Activated CD8-positive, alpha-beta T cell treated with anti-CD3 and anti-CD28 coated beads for 36 hours (primary cell): ENCODE measurements at regions of chr12 and their contacts with region 1.

Region 1: DNA sequence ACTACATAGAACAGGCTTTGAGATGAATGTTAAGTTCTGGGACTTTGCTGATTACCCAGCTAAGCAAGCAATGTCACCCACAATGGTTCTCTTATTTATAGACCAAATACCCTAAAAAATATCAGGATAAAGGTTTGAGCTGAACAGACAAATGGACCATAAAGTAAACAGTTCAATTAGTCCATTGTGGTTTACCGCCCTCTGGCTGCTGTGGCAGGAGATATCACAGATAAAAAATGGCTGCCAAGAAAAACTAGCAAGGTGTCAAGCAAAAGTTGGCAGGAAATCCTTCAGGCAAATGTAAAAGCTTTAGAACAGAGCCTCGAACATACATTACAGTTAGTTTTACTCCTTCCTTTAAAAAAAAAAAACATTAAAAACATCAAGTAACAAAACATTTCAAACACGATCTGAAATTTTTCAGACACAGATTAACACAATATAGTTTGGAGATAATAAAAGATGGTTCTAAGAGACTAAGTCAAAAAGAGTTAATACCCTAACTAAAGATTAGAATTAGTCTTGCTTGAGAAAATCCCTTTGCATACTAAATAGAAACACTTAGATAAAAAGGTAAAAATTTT is 41.3 kb downstream of the MED13L start:
- DNase-seq: peak; percentile 70
- ATAC-seq: peak; percentile 71
- H3K4me3 Mint-ChIP-seq: peak overlapping the region; percentile 53
- H3K27ac Mint-ChIP-seq: peak overlapping the region; percentile 85
- H3K4me1 Mint-ChIP-seq: peaks cover 40% of the 10 kb centered on the region
- H3K27me3 Mint-ChIP-seq: no peaks in the 10 kb centered on the region
- CTCF ChIP-seq: peak; percentile 64

Region 2: GRCh38 chr12:115998119-115998633 is 238.1 kb before region 1 on chr12:
- CTCF ChIA-PET with region 1: interaction called, 17 read pairs
- POLR2A ChIA-PET with region 1: no interaction called
- intact Hi-C with region 1: no loop called
- DNase-seq: peak; percentile 14
- ATAC-seq: peak; percentile 66
- H3K4me3 Mint-ChIP-seq: no peak overlapping the region
- H3K27ac Mint-ChIP-seq: no peak overlapping the region
- H3K4me1 Mint-ChIP-seq: peaks cover 6% of the 10 kb centered on the region
- H3K27me3 Mint-ChIP-seq: no peaks in the 10 kb centered on the region
- CTCF ChIP-seq: peak; percentile 95

Region 3: DNA sequence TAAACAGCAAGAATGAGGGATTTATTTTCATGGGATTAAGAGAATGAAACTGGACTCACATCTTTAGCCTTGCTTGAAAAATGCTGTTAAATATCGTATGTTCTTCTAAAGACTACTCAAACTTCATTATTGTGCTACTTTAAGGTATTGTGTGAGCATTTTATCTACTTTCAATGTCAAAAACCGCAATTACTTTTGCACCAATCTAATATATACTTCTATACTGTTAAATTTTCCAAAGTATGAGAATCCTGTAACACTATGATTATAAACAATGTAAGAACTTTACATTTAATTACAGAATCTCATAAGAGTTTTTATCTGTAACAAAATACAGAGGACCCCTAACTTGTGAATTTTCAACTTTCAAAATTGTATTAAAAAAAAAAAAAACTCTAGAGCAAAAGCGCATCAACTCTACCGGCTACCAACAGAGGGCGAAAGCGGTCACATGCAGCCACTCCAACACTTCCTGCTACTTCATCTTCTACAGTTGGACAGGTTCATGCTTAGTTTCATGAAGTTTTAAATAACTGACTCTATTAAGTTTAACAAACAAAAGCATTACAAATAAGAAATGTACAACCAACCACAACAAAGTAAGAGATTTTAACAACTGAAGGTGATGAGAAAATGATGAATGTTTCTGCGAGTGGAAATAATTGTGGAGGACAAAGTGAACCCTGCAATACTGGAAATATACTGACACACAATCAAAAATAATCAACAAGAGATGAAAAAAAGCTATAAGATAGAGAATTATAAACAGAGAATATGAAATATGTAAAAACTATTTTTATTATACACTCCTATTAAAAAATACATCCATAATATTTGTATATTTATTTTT is 169.6 kb before region 1 on chr12:
- CTCF ChIA-PET with region 1: interaction called, 12 read pairs
- POLR2A ChIA-PET with region 1: no interaction called
- intact Hi-C with region 1: no loop called
- DNase-seq: peak; percentile 75
- ATAC-seq: peak; percentile 85
- H3K4me3 Mint-ChIP-seq: no peak overlapping the region
- H3K27ac Mint-ChIP-seq: peak overlapping the region; percentile 25
- H3K4me1 Mint-ChIP-seq: peaks cover 29% of the 10 kb centered on the region
- H3K27me3 Mint-ChIP-seq: no peaks in the 10 kb centered on the region
- CTCF ChIP-seq: peak; percentile 82

Region 4: GRCh38 chr12:116091579-116091978 is 144.7 kb before region 1 on chr12:
- CTCF ChIA-PET with region 1: no interaction called
- POLR2A ChIA-PET with region 1: no interaction called
- intact Hi-C with region 1: no loop called
- DNase-seq: no peak
- ATAC-seq: no peak
- H3K4me3 Mint-ChIP-seq: no peak overlapping the region
- H3K27ac Mint-ChIP-seq: no peak overlapping the region
- H3K4me1 Mint-ChIP-seq: peaks cover 41% of the 10 kb centered on the region
- H3K27me3 Mint-ChIP-seq: no peaks in the 10 kb centered on the region
- CTCF ChIP-seq: no peak

Region 5: DNA sequence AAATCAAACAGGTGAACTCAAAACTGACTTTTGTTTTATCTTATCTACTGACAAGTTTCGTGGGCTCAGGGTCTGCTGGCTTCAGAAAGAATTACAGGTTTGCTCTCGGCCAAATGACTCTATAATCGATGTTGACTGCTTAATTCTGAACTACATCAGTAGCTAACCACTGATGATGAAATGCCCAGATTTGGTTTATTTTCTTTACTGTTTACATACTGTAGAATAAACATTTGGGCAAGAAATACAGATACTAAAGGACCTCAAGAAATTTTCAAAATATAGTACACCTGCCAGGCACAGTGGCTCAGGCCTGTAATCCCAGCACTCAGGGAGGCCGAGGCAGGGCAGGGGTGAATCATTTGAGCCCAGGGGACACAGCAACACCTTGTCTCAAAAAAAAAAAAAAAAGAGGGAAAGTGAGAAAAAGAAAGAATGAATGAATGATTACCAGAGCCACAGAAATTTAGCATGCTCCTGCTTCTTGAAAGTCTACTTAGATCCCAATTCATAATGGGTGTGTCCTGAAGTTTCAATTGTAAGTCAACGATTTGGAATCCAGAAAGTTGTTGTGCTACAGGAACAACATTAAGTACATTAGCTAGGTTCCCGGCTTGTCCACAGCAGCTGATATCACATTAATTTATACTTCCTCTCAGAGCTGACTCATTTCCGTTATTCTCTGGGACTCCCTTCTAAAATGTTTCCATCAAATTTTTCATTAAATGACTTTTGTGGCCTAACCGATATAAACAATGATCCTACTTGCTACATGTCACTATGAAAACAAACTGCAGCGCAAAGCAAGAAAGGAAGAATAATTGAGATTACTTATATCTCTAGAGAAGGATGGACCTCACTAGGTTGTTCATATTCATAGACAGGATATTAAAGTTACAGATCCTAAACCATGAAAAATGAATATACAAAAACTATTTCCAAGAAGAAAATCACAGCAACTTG is 93.0 kb before region 1 on chr12:
- CTCF ChIA-PET with region 1: interaction called, 15 read pairs
- POLR2A ChIA-PET with region 1: interaction called, 3 read pairs
- intact Hi-C with region 1: loop called (anchors 2 kb)
- DNase-seq: peak; percentile 31
- ATAC-seq: peak; percentile 70
- H3K4me3 Mint-ChIP-seq: peak overlapping the region; percentile 8
- H3K27ac Mint-ChIP-seq: peak overlapping the region; percentile 82
- H3K4me1 Mint-ChIP-seq: peaks cover 52% of the 10 kb centered on the region
- H3K27me3 Mint-ChIP-seq: no peaks in the 10 kb centered on the region
- CTCF ChIP-seq: no peak

Region 6: GRCh38 chr12:116267948-116268347 is 31.7 kb after region 1 on chr12:
- CTCF ChIA-PET with region 1: interaction called, 16 read pairs
- POLR2A ChIA-PET with region 1: no interaction called
- intact Hi-C with region 1: no loop called
- DNase-seq: no peak
- ATAC-seq: no peak
- H3K4me3 Mint-ChIP-seq: no peak overlapping the region
- H3K27ac Mint-ChIP-seq: no peak overlapping the region
- H3K4me1 Mint-ChIP-seq: peaks cover 36% of the 10 kb centered on the region
- H3K27me3 Mint-ChIP-seq: no peaks in the 10 kb centered on the region
- CTCF ChIP-seq: no peak